Heart right ventricle (tissue), 16 donors: ENCODE measurements at regions of chr1 and their contacts with region 1.

Region 1: DNA sequence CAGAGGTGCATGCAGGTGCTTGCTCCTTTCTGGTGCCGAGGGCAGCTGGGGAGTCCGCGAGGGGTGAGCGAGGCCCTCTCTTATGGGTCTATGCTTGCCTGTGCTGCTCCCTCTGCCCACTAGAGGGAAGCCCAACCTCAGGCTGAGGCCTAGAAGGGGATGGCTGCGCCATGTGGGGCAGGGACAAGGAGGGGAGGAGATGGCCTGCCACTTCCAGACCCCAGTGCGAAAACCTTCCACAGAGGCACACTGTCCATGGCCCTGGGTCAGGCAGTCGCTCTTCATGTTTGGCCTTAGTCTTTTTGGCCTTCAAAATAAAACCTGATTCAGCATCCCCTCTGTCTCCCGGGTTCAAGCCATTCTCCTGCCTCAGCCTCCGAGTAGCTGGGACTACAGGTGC is 14.0 kb downstream of the RHBG start:
- DNase-seq: peak; percentile 51 to 55
- ATAC-seq: peak; percentile 71 to 93 (median 80)
- H3K4me3 ChIP-seq: no peak overlapping the region
- H3K27ac ChIP-seq: no peak overlapping the region
- H3K4me1 ChIP-seq: peaks cover 0 to 4% (median 0%) of the 10 kb centered on the region in 9 donors
- H3K27me3 ChIP-seq: peaks cover 0 to 24% (median 22%) of the 10 kb centered on the region in 7 donors
- CTCF ChIP-seq: peak; percentile 52 to 83 (median 77)

Region 2: DNA sequence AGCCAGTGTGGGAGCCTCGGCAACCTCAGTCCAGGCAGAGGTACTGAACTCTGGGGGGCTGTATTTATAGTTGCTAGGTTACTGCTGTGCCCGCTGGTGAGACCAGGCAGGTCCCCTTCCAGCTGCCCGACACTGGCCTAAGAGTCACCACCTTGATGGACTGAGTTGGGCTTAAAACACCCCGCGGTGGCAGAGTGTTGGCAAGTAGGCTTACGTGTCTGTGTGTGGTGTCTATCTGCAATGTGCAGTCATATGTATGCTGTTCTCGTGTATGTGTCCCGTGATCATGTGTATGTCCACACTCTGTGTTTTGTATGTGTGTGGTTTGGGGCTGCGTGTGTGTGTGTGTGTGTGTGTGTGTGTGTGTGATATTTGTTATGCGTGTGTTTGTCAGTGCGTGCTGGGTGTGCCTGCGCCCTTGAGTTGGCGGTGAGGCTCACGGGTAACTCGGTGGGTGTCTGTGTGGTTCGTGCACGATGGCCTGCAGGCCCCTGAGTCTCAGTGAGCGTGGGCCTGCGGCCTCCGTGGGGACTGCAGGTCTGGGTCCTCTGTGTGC is 52.0 kb after region 1 on chr1:
- intact Hi-C with region 1: loop called in 1 of 10 experiments (anchors 5 kb)
- DNase-seq: no peak
- ATAC-seq: peak in 1 of 8 donors; percentile 12
- H3K4me3 ChIP-seq: peak overlapping the region in 9 of 10 donors; percentile 25 to 51 (median 44)
- H3K27ac ChIP-seq: no peak overlapping the region
- H3K4me1 ChIP-seq: peaks cover 0 to 18% (median 14%) of the 10 kb centered on the region in 9 donors
- H3K27me3 ChIP-seq: peaks cover 41 to 100% (median 99%) of the 10 kb centered on the region in 7 donors
- CTCF ChIP-seq: no peak

Region 3: GRCh38 chr1:156445789-156446263 is 62.8 kb after region 1 on chr1:
- intact Hi-C with region 1: loop called (anchors 1 to 2 kb)
- DNase-seq: peak; percentile 81 to 82
- ATAC-seq: peak; percentile 86 to 94 (median 90)
- H3K4me3 ChIP-seq: no peak overlapping the region
- H3K27ac ChIP-seq: no peak overlapping the region
- H3K4me1 ChIP-seq: peaks cover 0 to 8% (median 0%) of the 10 kb centered on the region in 9 donors
- H3K27me3 ChIP-seq: peaks cover 15 to 58% (median 46%) of the 10 kb centered on the region in 7 donors
- CTCF ChIP-seq: peak; percentile 88 to 97 (median 96)

Region 4: GRCh38 chr1:156540791-156541383 is 157.9 kb after region 1 on chr1:
- intact Hi-C with region 1: loop called in 1 of 10 experiments (anchors 10 kb)
- DNase-seq: no peak
- ATAC-seq: peak in 6 of 8 donors; percentile 21 to 55 (median 52)
- H3K4me3 ChIP-seq: no peak overlapping the region
- H3K27ac ChIP-seq: no peak overlapping the region
- H3K4me1 ChIP-seq: peaks cover 0 to 3% (median 0%) of the 10 kb centered on the region in 9 donors
- H3K27me3 ChIP-seq: no peaks in the 10 kb centered on the region
- CTCF ChIP-seq: no peak

Region 5: GRCh38 chr1:156601122-156601830 is 218.3 kb after region 1 on chr1 and contains the start of gene GPATCH4:
- intact Hi-C with region 1: loop called in 4 of 10 experiments (anchors 5 to 10 kb)
- DNase-seq: peak; percentile 59 to 84
- ATAC-seq: peak; percentile 78 to 92 (median 87)
- H3K4me3 ChIP-seq: peak within 1 kb of the TSS; percentile 34 to 85 (median 70)
- H3K27ac ChIP-seq: peak within 1 kb of the TSS in 9 of 10 donors; percentile 57 to 84 (median 80)
- H3K4me1 ChIP-seq: peaks cover 7 to 25% (median 15%) of the 10 kb centered on the region in 9 donors
- H3K27me3 ChIP-seq: no peaks in the 10 kb centered on the region
- CTCF ChIP-seq: no peak
- total RNA-seq, gene GPATCH4: 9.3 to 25.4 (median 13.3) TPM

Region 6: DNA sequence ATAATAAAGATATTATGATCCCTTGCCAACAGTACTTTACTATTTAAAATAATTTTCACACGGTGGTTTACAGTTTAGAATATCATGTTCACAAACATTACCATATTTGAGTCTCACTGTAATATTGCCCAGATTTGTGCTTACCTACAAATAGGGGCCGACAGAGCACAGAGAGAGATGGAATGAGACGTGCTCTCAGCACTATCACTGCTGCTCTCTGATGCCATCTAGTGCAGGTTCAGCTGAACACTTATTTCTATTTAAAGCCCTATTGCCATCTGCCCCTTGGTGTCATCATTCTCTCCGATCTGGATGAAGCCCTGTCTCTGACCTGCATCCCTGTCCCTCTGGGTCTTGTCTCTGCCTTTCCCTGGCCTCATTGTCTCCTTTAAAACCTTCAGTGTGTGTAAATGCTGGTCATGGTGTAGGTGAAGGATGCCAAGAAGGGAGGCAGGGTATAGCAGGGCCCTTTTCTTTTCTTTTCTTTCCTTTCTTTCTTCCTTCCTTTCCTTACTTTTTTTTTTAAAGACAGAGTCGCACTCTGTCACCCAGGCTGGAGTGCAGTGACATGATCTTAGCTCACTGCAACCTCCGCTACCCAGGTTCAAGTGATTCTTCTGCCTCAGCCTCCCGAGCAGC is 225.1 kb after region 1 on chr1:
- intact Hi-C with region 1: loop called in 9 of 10 experiments (anchors 1 to 10 kb)
- DNase-seq: peak in 1 of 2 donors; percentile 70
- ATAC-seq: peak; percentile 84 to 96 (median 93)
- H3K4me3 ChIP-seq: no peak overlapping the region
- H3K27ac ChIP-seq: no peak overlapping the region
- H3K4me1 ChIP-seq: peaks cover 0 to 9% (median 0%) of the 10 kb centered on the region in 9 donors
- H3K27me3 ChIP-seq: peaks cover 0 to 22% (median 0%) of the 10 kb centered on the region in 7 donors
- CTCF ChIP-seq: peak; percentile 64 to 86 (median 78)

Region 7: GRCh38 chr1:156659994-156660751 is 277.1 kb after region 1 on chr1:
- intact Hi-C with region 1: loop called in 2 of 10 experiments (anchors 5 to 10 kb)
- DNase-seq: peak; percentile 97 to 98
- ATAC-seq: peak; percentile 82 to 91 (median 85)
- H3K4me3 ChIP-seq: peak overlapping the region in 8 of 10 donors; percentile 18 to 46 (median 39)
- H3K27ac ChIP-seq: peak overlapping the region; percentile 68 to 99 (median 96)
- H3K4me1 ChIP-seq: peaks cover 54 to 85% (median 80%) of the 10 kb centered on the region in 9 donors
- H3K27me3 ChIP-seq: peaks cover 0 to 28% (median 18%) of the 10 kb centered on the region in 7 donors
- CTCF ChIP-seq: peak; percentile 93 to 100 (median 99)